ENCODE measurements at regions of chr11 and their contacts with region 1.

Region 1: DNA sequence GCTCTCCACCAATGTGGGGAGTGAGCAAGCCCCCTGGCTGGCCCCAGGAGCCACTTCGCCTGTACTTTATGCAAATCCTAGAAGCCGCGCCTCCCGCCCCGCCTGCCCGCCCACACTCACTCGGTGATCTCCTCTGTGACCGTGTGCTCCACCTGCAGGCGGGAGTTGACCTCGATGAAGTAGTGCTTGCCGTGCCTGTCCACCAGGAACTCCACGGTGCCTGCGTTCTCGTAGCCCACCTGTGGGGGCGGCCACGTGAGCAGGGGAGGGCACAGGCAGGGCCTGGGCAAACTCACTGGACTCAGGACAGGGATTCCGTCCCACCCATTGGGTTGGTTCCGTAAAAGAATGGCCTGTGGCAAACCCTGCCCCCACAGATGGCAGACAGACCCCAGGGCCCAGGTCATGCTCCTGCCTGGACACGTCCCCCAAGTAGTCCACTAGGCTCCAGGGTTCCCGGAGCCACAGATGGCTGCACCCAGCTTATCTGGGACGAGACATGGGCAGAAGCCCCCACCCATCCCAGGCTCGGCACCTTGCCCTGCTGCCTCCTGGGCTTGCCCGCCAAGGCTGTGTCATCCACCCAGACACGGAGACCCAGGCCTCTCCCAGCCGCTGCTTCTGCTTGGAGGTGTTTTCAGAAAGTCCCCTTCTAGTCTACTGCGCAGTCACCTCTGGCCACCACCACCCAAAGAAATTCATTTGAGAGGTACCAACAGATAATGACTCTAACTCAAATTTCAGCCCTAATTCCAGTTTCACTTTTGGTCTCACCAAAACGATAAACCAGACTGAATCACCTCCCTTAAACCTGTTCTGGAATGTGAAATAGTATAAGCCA is 12.1 kb downstream of the LRFN4 start:
- DNase-seq: peak; percentile 89
- ATAC-seq: peak; percentile 98
- H3K4me3 ChIP-seq: peak overlapping the region in 2 of 5 experiments; percentile 19 to 20
- H3K4me3 Mint-ChIP-seq: peak overlapping the region; percentile 23
- H3K27ac ChIP-seq: no peak overlapping the region
- H3K27ac Mint-ChIP-seq: peak overlapping the region; percentile 39
- H3K4me1 ChIP-seq: peaks cover 4 to 10% of the 10 kb centered on the region in 2 donors
- H3K4me1 Mint-ChIP-seq: peaks cover 16% of the 10 kb centered on the region
- H3K27me3 ChIP-seq: no peaks in the 10 kb centered on the region
- H3K27me3 Mint-ChIP-seq: no peaks in the 10 kb centered on the region
- CTCF ChIP-seq: peak; percentile 89

Region 2: GRCh38 chr11:66727883-66728692 is 140.9 kb before region 1 on chr11:
- CTCF ChIA-PET with region 1: no interaction called
- POLR2A ChIA-PET with region 1: no interaction called
- intact Hi-C with region 1: loop called (anchors 1 kb)
- DNase-seq: no peak
- ATAC-seq: peak; percentile 50
- H3K4me3 ChIP-seq: peak overlapping the region; percentile 9 to 72 (median 51)
- H3K4me3 Mint-ChIP-seq: peak overlapping the region; percentile 93
- H3K27ac ChIP-seq: no peak overlapping the region
- H3K27ac Mint-ChIP-seq: peak overlapping the region; percentile 70
- H3K4me1 ChIP-seq: peaks cover 15 to 20% of the 10 kb centered on the region in 2 donors
- H3K4me1 Mint-ChIP-seq: peaks cover 19% of the 10 kb centered on the region
- H3K27me3 ChIP-seq: peaks cover 0 to 43% (median 19%) of the 10 kb centered on the region in 4 experiments
- H3K27me3 Mint-ChIP-seq: peaks cover 45% of the 10 kb centered on the region
- CTCF ChIP-seq: no peak

Region 3: DNA sequence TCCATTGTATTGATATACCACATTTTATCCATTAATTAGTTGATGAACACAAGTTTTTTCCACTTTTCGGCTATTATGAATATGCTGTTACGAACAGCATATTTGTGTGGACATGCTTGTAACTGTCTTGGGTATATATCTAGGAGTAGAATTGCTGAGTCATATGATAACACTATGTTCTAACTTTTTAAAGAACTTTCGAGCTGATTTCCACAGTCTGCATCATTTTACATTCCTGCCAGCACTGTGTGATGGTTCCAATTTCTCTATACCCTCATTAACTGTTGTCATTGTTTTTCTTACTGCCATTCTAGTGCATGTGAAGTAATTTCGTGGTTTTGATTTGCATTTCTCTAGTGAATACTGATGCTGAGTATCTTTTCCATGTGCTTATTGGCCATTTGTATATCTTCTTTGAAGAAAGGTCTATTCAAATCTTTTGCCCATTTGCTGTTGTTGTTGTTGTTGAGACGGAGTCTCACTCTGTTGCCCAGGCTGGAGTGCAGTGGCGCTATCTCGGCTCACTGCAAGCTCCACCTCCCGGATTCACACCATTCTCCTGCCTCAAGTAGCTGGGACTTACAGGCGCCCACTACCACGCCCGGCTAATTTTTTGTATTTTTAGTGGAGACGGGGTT is 33.1 kb before region 1 on chr11:
- CTCF ChIA-PET with region 1: interaction called, 5 read pairs
- POLR2A ChIA-PET with region 1: no interaction called
- intact Hi-C with region 1: loop called (anchors 2 kb)
- DNase-seq: no peak
- ATAC-seq: no peak
- H3K4me3 ChIP-seq: no peak overlapping the region
- H3K4me3 Mint-ChIP-seq: no peak overlapping the region
- H3K27ac ChIP-seq: no peak overlapping the region
- H3K27ac Mint-ChIP-seq: peak overlapping the region; percentile 15
- H3K4me1 ChIP-seq: peaks cover 6 to 18% of the 10 kb centered on the region in 2 donors
- H3K4me1 Mint-ChIP-seq: peaks cover 32% of the 10 kb centered on the region
- H3K27me3 ChIP-seq: no peaks in the 10 kb centered on the region
- H3K27me3 Mint-ChIP-seq: no peaks in the 10 kb centered on the region
- CTCF ChIP-seq: no peak

Region 4: DNA sequence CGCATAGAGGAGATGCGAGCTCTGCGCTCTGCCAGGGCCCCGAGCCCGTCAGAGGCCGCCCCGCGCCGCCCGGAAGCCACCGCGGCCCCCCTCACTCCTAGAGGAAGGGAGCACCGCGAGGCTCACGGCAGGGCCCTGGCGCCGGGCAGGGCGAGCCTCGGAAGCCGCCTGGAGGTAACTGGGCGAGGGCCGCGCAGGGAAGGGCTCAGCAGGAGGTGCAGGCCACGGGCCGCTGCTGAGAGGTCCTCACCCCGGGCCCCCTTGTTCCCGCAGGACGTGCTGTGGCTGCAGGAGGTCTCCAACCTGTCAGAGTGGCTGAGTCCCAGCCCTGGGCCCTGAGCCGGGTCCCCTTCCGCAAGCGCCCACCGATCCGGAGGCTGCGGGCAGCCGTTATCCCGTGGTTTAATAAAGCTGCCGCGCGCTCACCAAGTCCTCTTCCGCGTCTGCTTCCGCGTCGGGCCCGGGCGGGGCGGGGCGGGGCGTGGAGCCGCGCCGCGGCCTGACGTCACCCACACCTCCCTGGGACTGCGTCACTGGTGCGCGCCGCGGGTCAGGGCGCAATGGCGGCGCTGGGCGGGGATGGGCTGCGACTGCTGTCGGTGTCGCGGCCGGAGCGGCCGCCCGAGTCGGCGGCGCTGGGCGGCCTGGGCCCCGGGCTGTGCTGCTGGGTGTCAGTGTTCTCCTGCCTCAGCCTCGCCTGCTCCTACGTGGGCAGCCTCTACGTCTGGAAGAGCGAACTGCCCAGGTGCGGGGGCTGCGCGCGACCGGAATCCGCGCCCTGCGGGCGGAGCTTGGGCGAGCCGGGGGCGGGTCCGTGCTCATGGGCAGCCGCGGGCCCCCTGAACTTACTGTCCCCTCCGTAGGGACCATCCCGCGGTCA is 25.8 kb before region 1 on chr11 and contains the start of gene RCE1:
- CTCF ChIA-PET with region 1: interaction called, 3 read pairs
- POLR2A ChIA-PET with region 1: interaction called, 3 read pairs
- intact Hi-C with region 1: loop called (anchors 1 kb)
- DNase-seq: peak; percentile 96
- ATAC-seq: peak; percentile 91
- H3K4me3 ChIP-seq: peak within 1 kb of the TSS; percentile 74 to 100 (median 95)
- H3K4me3 Mint-ChIP-seq: peak within 1 kb of the TSS; percentile 90
- H3K27ac ChIP-seq: peak within 1 kb of the TSS; percentile 98 to 99
- H3K27ac Mint-ChIP-seq: peak within 1 kb of the TSS; percentile 94
- H3K4me1 ChIP-seq: peaks cover 28 to 37% of the 10 kb centered on the region in 2 donors
- H3K4me1 Mint-ChIP-seq: peaks cover 43% of the 10 kb centered on the region
- H3K27me3 ChIP-seq: no peaks in the 10 kb centered on the region
- H3K27me3 Mint-ChIP-seq: no peaks in the 10 kb centered on the region
- CTCF ChIP-seq: no peak
- total RNA-seq, gene RCE1: 31.6 and 34.3 TPM in 2 replicates

Region 5: GRCh38 chr11:66889974-66890373 is 21.0 kb after region 1 on chr11:
- CTCF ChIA-PET with region 1: no interaction called
- POLR2A ChIA-PET with region 1: no interaction called
- intact Hi-C with region 1: no loop called
- DNase-seq: no peak
- ATAC-seq: no peak
- H3K4me3 ChIP-seq: no peak overlapping the region
- H3K4me3 Mint-ChIP-seq: no peak overlapping the region
- H3K27ac ChIP-seq: no peak overlapping the region
- H3K27ac Mint-ChIP-seq: no peak overlapping the region
- H3K4me1 ChIP-seq: no peaks in the 10 kb centered on the region
- H3K4me1 Mint-ChIP-seq: no peaks in the 10 kb centered on the region
- H3K27me3 ChIP-seq: peaks cover 0 to 8% (median 4%) of the 10 kb centered on the region in 4 experiments
- H3K27me3 Mint-ChIP-seq: peaks cover 23% of the 10 kb centered on the region
- CTCF ChIP-seq: no peak

Measured in B cell (primary cell).